Naive thymus-derived CD4-positive, alpha-beta T cell (primary cell): ENCODE measurements at regions of chr3 and their contacts with region 1.

Region 1: DNA sequence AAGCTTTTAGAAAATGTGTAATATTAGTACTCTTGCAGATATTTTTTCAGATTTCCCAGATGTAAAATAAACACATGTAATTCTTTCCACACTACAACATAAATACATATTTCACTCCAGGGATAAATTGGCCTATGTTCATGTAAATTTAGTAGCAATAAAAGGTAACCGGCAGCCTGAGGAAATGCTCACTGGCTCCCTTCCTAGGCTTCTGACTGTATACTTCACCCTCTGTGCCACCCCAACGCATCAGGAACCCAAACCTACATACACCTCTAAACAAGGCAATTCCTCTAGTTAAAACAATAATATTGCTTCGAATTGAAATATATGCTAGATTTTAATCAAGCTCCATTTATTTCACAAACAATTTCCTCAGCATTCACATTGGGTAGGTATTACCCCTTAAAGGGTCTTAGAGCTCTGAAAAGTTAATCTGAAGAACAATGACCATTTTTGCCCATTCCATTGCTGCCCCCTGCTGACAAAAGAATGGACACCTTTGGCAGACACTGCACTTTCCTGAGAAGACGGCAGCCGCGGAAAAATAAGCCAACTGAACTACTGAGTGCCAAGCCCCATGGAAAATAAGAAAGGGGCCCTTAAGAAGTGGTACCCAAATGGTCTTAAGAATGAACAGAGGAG is 212.5 kb downstream of the OSBPL10 start:
- DNase-seq: peak; percentile 8 to 59 (median 43)
- ATAC-seq: peak; percentile 46
- H3K4me3 ChIP-seq: no peak overlapping the region
- H3K4me3 Mint-ChIP-seq: peak overlapping the region in 1 of 10 donors; percentile 19
- H3K27ac ChIP-seq: no peak overlapping the region
- H3K27ac Mint-ChIP-seq: peak overlapping the region in 1 of 9 donors; percentile 21
- H3K4me1 ChIP-seq: no peaks in the 10 kb centered on the region
- H3K4me1 Mint-ChIP-seq: peaks cover 2 to 53% (median 4%) of the 10 kb centered on the region in 7 donors
- H3K27me3 ChIP-seq: no peaks in the 10 kb centered on the region
- H3K27me3 Mint-ChIP-seq: no peaks in the 10 kb centered on the region

Region 2: GRCh38 chr3:30112902-30113484 is 1655.6 kb before region 1 on chr3:
- CTCF ChIA-PET with region 1: interaction called, 3 read pairs
- POLR2A ChIA-PET with region 1: no interaction called
- intact Hi-C with region 1: loop called in 1 of 2 experiments (anchors 1 kb)
- DNase-seq: peak in 7 of 9 donors; percentile 17 to 68 (median 55)
- ATAC-seq: peak; percentile 61
- H3K4me3 ChIP-seq: no peak overlapping the region
- H3K4me3 Mint-ChIP-seq: no peak overlapping the region
- H3K27ac ChIP-seq: no peak overlapping the region
- H3K27ac Mint-ChIP-seq: no peak overlapping the region
- H3K4me1 ChIP-seq: no peaks in the 10 kb centered on the region
- H3K4me1 Mint-ChIP-seq: peaks cover 4 to 8% (median 6%) of the 10 kb centered on the region in 7 donors
- H3K27me3 ChIP-seq: no peaks in the 10 kb centered on the region
- H3K27me3 Mint-ChIP-seq: peaks cover 0 to 16% (median 9%) of the 10 kb centered on the region in 5 donors

Region 3: DNA sequence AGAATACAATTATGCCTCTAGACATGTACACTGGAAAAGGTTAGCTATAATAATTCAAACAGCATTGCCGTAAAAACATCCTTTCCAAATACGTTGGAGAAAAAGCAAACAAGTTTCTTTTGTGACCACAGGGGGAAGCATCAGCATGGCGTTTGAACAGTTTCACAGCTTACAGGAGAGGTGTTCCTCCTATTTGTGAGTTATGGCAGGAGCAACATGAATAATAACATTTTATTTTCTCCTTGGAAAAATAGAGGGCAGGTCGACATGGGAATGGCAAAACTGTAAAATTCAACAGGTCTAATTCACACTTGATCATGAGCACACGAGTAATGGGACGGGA is 834.4 kb before region 1 on chr3:
- CTCF ChIA-PET with region 1: interaction called, 5 read pairs
- POLR2A ChIA-PET with region 1: interaction called, 3 read pairs
- intact Hi-C with region 1: loop called in 1 of 2 experiments (anchors 1 kb)
- DNase-seq: peak in 4 of 9 donors; percentile 2 to 16 (median 10)
- ATAC-seq: no peak
- H3K4me3 ChIP-seq: no peak overlapping the region
- H3K4me3 Mint-ChIP-seq: peak overlapping the region in 3 of 10 donors; percentile 11 to 65 (median 24)
- H3K27ac ChIP-seq: no peak overlapping the region
- H3K27ac Mint-ChIP-seq: no peak overlapping the region
- H3K4me1 ChIP-seq: no peaks in the 10 kb centered on the region
- H3K4me1 Mint-ChIP-seq: peaks cover 2 to 10% (median 8%) of the 10 kb centered on the region in 7 donors
- H3K27me3 ChIP-seq: no peaks in the 10 kb centered on the region
- H3K27me3 Mint-ChIP-seq: no peaks in the 10 kb centered on the region

Region 4: GRCh38 chr3:31361371-31362273 is 407.0 kb before region 1 on chr3:
- CTCF ChIA-PET with region 1: interaction called, 3 read pairs
- POLR2A ChIA-PET with region 1: no interaction called
- intact Hi-C with region 1: loop called in 1 of 2 experiments (anchors 5 kb)
- DNase-seq: no peak
- ATAC-seq: no peak
- H3K4me3 ChIP-seq: no peak overlapping the region
- H3K4me3 Mint-ChIP-seq: no peak overlapping the region
- H3K27ac ChIP-seq: no peak overlapping the region
- H3K27ac Mint-ChIP-seq: no peak overlapping the region
- H3K4me1 ChIP-seq: no peaks in the 10 kb centered on the region
- H3K4me1 Mint-ChIP-seq: peaks cover 26 to 44% (median 38%) of the 10 kb centered on the region in 7 donors
- H3K27me3 ChIP-seq: no peaks in the 10 kb centered on the region
- H3K27me3 Mint-ChIP-seq: no peaks in the 10 kb centered on the region

Region 5: GRCh38 chr3:31610700-31611275 is 157.8 kb before region 1 on chr3:
- CTCF ChIA-PET with region 1: no interaction called
- POLR2A ChIA-PET with region 1: no interaction called
- intact Hi-C with region 1: loop called in 1 of 2 experiments (anchors 1 kb)
- DNase-seq: no peak
- ATAC-seq: no peak
- H3K4me3 ChIP-seq: no peak overlapping the region
- H3K4me3 Mint-ChIP-seq: peak overlapping the region in 1 of 10 donors; percentile 36
- H3K27ac ChIP-seq: no peak overlapping the region
- H3K27ac Mint-ChIP-seq: peak overlapping the region in 5 of 9 donors; percentile 2 to 55 (median 17)
- H3K4me1 ChIP-seq: peaks cover 5 to 8% of the 10 kb centered on the region in 2 donors
- H3K4me1 Mint-ChIP-seq: peaks cover 46 to 90% (median 75%) of the 10 kb centered on the region in 7 donors
- H3K27me3 ChIP-seq: no peaks in the 10 kb centered on the region
- H3K27me3 Mint-ChIP-seq: no peaks in the 10 kb centered on the region